ENCODE measurements at regions of chr22 and their contacts with region 1.

Region 1: DNA sequence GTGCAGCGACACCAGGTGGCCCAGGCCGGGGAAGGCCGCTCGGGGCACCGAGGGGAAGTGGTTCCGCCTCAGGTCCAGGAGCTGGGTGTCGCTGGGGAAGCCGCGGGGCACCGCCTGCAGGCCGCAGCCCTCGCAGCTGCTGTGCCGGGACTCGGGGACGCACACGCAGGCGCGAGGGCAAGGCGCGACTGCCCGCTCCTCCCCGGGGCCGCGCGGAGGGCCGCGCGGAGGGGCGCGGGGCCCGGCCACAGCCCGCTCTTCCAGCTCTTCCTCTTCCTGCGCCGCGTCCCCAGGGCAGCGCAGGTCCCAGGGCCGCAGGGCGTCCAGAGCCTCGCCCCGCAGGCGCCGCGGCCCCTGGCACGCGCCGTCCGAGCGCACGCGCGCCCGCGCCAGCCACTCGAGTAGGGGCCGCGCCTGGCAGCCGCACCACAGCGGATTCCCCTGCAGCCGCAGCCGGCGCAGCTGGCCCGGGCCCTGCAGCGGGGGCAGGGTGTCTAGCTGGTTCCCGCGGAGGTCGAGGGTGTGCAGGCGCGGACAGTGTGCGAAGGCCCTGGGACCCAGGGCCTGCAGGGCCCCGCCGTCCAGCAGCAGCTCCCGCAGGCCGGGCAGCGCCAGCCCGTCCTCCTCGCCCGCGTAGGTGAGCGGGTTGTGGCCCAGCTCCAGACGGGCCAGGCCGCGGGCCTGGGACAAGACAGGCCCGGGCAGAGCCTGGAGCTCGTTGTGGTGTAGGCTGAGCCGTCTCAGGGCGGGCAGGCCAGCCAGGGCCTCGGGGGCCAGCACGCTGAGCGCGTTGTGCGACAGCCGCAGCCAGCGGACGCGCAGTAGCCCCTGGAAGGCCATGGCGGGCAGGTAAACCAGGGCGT is 2.8 kb downstream of the CHADL start:
- DNase-seq: peak; percentile 74 to 86 (median 84)
- ATAC-seq: peak; percentile 96
- H3K4me3 ChIP-seq: peak overlapping the region; percentile 10
- H3K4me3 Mint-ChIP-seq: peak overlapping the region in 9 of 10 donors; percentile 54 to 78 (median 73)
- H3K27ac ChIP-seq: peak overlapping the region; percentile 57
- H3K27ac Mint-ChIP-seq: peak overlapping the region in 2 of 9 donors; percentile 44 to 63
- H3K4me1 ChIP-seq: peaks cover 0 to 11% of the 10 kb centered on the region in 2 donors
- H3K4me1 Mint-ChIP-seq: peaks cover 5 to 19% (median 11%) of the 10 kb centered on the region in 7 donors
- H3K27me3 ChIP-seq: no peaks in the 10 kb centered on the region
- H3K27me3 Mint-ChIP-seq: peaks cover 0 to 2% (median 0%) of the 10 kb centered on the region in 5 donors

Region 2: DNA sequence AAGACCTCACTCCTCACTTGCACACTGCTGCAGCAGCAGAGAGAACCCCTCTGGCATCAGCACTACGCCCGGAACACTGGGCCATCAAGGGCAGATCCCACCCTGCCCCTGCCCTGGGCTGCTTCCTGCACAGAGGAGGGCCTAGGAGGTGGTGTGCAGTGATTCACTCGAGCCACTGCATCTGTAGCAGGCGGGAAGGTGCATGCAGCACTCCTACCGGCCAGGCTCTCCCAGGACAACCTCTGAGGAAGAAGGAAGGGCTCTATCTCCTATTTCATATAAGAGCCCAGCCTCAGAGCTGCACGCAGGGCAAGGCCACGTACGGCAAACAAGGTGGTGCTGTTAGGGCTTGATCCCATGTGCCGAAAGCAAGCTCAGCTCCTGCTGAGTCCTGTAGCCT is 33.8 kb after region 1 on chr22:
- CTCF ChIA-PET with region 1: no interaction called
- POLR2A ChIA-PET with region 1: no interaction called
- intact Hi-C with region 1: no loop called
- DNase-seq: no peak
- ATAC-seq: no peak
- H3K4me3 ChIP-seq: no peak overlapping the region
- H3K4me3 Mint-ChIP-seq: no peak overlapping the region
- H3K27ac ChIP-seq: no peak overlapping the region
- H3K27ac Mint-ChIP-seq: no peak overlapping the region
- H3K4me1 ChIP-seq: no peaks in the 10 kb centered on the region
- H3K4me1 Mint-ChIP-seq: peaks cover 0 to 10% (median 0%) of the 10 kb centered on the region in 7 donors
- H3K27me3 ChIP-seq: no peaks in the 10 kb centered on the region
- H3K27me3 Mint-ChIP-seq: no peaks in the 10 kb centered on the region

Region 3: DNA sequence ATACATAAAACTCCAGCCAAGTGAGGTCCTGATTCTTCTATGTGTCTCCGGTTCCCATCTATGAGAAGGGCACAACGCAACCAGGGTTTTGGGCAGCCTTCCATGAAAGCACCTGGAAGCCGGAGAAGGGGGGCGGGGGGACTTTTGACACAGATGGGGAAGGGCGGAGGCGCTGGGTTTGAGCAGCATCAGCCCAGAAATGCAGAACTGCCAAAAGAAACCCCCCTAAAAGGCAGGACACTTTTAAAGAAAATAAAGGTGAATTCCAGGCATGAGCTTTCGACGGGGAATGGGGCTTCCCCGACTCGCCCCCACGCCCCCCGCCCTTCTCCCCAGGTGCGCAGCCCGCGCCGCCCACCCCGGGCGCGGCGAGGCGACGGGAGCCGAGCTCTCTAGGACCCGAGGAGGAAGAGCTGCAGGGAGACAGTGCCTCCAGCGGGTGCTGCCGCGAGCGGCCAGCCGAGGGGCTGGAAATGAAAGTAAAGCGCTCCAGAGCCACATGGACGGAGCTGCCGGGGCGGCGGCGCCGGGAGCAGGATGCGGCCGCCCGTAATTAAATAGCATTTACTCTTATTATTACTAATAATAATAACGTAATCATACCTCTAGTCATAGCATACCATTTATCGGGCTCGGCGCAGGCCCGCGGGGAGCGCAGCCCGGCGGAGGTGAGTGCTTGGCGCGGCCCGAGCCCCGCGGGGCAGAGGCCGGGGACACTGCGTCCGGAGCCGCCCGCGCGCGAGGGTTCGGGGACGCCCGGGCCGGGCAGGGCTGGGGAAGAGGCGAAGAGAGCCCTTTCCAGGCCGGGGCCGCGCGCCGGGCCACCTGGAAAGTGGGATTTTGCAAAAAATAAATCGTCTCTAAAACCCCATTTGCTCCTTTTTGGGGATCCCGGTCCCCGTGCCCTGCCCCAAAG is 63.4 kb after region 1 on chr22 and contains the start of gene ZC3H7B:
- CTCF ChIA-PET with region 1: no interaction called
- POLR2A ChIA-PET with region 1: no interaction called
- intact Hi-C with region 1: loop called in 1 of 2 experiments (anchors 5 kb)
- DNase-seq: peak; percentile 73 to 89 (median 83)
- ATAC-seq: peak; percentile 98
- H3K4me3 ChIP-seq: peak within 1 kb of the TSS; percentile 22
- H3K4me3 Mint-ChIP-seq: peak within 1 kb of the TSS; percentile 67 to 91 (median 85)
- H3K27ac ChIP-seq: peak within 1 kb of the TSS; percentile 82
- H3K27ac Mint-ChIP-seq: peak within 1 kb of the TSS; percentile 72 to 96 (median 87)
- H3K4me1 ChIP-seq: peaks cover 13 to 15% of the 10 kb centered on the region in 2 donors
- H3K4me1 Mint-ChIP-seq: peaks cover 19 to 35% (median 32%) of the 10 kb centered on the region in 7 donors
- H3K27me3 ChIP-seq: no peaks in the 10 kb centered on the region
- H3K27me3 Mint-ChIP-seq: no peaks in the 10 kb centered on the region
- total RNA-seq, gene ZC3H7B: 36.9 to 65.9 (median 42.7) TPM

Region 4: DNA sequence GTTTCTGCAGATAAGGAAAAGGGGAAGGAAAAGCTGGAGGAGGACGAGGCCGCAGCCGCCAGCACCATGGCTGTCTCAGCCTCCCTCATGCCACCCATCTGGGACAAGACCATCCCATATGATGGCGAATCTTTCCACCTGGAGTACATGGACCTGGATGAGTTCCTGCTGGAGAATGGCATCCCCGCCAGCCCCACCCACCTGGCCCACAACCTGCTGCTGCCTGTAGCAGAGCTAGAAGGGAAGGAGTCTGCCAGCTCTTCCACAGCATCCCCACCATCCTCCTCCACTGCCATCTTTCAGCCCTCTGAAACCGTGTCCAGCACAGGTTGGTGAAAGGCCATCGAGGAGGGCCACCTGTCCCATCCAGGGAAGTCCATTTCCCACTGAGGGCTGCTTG is 149.4 kb after region 1 on chr22:
- CTCF ChIA-PET with region 1: no interaction called
- POLR2A ChIA-PET with region 1: no interaction called
- intact Hi-C with region 1: no loop called
- DNase-seq: no peak
- ATAC-seq: no peak
- H3K4me3 ChIP-seq: no peak overlapping the region
- H3K4me3 Mint-ChIP-seq: no peak overlapping the region
- H3K27ac ChIP-seq: no peak overlapping the region
- H3K27ac Mint-ChIP-seq: no peak overlapping the region
- H3K4me1 ChIP-seq: peaks cover 4 to 7% of the 10 kb centered on the region in 2 donors
- H3K4me1 Mint-ChIP-seq: peaks cover 2 to 22% (median 16%) of the 10 kb centered on the region in 7 donors
- H3K27me3 ChIP-seq: no peaks in the 10 kb centered on the region
- H3K27me3 Mint-ChIP-seq: no peaks in the 10 kb centered on the region

Measured in naive thymus-derived CD4-positive, alpha-beta T cell (primary cell).